ENCODE measurements at regions of chr9 and their contacts with region 1.

Region 1: DNA sequence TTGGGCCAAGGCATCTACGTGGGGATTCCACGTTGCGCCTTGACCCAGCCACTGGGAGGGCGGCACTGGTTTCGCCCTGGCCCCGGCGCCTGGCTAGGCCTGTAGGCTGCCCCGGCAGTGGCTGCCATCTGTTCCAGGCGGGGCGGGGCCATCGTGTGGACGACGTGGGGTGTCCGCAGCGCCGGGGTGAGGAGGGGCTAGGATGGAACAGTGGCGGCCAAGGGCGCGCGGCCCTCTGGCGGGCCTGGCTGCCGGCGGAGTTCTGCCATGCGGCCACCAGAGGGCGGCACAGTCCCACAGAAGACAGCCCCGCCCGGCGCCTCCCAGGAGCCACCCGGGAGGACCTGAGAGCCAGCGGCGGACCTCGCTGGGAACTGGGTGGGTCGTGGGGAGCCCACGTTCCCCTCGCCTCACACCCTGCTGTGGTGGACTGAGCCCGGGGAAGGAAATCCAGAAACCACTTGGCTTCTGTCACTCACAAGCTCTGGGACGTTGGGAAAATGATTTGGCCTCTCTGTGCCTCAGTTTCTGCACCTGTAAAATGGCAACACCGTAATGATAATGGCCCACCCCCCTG is 22.6 kb upstream of the RAPGEF1 start:
- DNase-seq: peak; percentile 47 to 87 (median 68)
- ATAC-seq: peak; percentile 98
- H3K4me3 ChIP-seq: no peak overlapping the region
- H3K4me3 Mint-ChIP-seq: peak overlapping the region in 1 of 10 donors; percentile 19
- H3K27ac ChIP-seq: no peak overlapping the region
- H3K27ac Mint-ChIP-seq: no peak overlapping the region
- H3K4me1 ChIP-seq: no peaks in the 10 kb centered on the region
- H3K4me1 Mint-ChIP-seq: no peaks in the 10 kb centered on the region
- H3K27me3 ChIP-seq: no peaks in the 10 kb centered on the region
- H3K27me3 Mint-ChIP-seq: peaks cover 0 to 39% (median 9%) of the 10 kb centered on the region in 5 donors

Region 2: GRCh38 chr9:131776473-131776872 is 14.0 kb after region 1 on chr9:
- CTCF ChIA-PET with region 1: no interaction called
- POLR2A ChIA-PET with region 1: no interaction called
- intact Hi-C with region 1: no loop called
- DNase-seq: peak in 1 of 9 donors; percentile 54
- ATAC-seq: no peak
- H3K4me3 ChIP-seq: no peak overlapping the region
- H3K4me3 Mint-ChIP-seq: no peak overlapping the region
- H3K27ac ChIP-seq: no peak overlapping the region
- H3K27ac Mint-ChIP-seq: no peak overlapping the region
- H3K4me1 ChIP-seq: no peaks in the 10 kb centered on the region
- H3K4me1 Mint-ChIP-seq: peaks cover 0 to 6% (median 0%) of the 10 kb centered on the region in 7 donors
- H3K27me3 ChIP-seq: no peaks in the 10 kb centered on the region
- H3K27me3 Mint-ChIP-seq: peaks cover 0 to 30% (median 17%) of the 10 kb centered on the region in 5 donors

Region 3: GRCh38 chr9:131954299-131954698 is 191.9 kb after region 1 on chr9:
- CTCF ChIA-PET with region 1: no interaction called
- POLR2A ChIA-PET with region 1: no interaction called
- intact Hi-C with region 1: loop called in 1 of 2 experiments (anchors 5 kb)
- DNase-seq: no peak
- ATAC-seq: no peak
- H3K4me3 ChIP-seq: no peak overlapping the region
- H3K4me3 Mint-ChIP-seq: no peak overlapping the region
- H3K27ac ChIP-seq: no peak overlapping the region
- H3K27ac Mint-ChIP-seq: no peak overlapping the region
- H3K4me1 ChIP-seq: no peaks in the 10 kb centered on the region
- H3K4me1 Mint-ChIP-seq: peaks cover 0 to 4% (median 0%) of the 10 kb centered on the region in 7 donors
- H3K27me3 ChIP-seq: no peaks in the 10 kb centered on the region
- H3K27me3 Mint-ChIP-seq: no peaks in the 10 kb centered on the region

Region 4: GRCh38 chr9:132249123-132249522 is 486.7 kb after region 1 on chr9:
- CTCF ChIA-PET with region 1: interaction called, 5 read pairs
- POLR2A ChIA-PET with region 1: no interaction called
- intact Hi-C with region 1: loop called (anchors 1 kb)
- DNase-seq: no peak
- ATAC-seq: no peak
- H3K4me3 ChIP-seq: no peak overlapping the region
- H3K4me3 Mint-ChIP-seq: no peak overlapping the region
- H3K27ac ChIP-seq: no peak overlapping the region
- H3K27ac Mint-ChIP-seq: no peak overlapping the region
- H3K4me1 ChIP-seq: no peaks in the 10 kb centered on the region
- H3K4me1 Mint-ChIP-seq: peaks cover 0 to 5% (median 0%) of the 10 kb centered on the region in 7 donors
- H3K27me3 ChIP-seq: no peaks in the 10 kb centered on the region
- H3K27me3 Mint-ChIP-seq: peaks cover 0 to 25% (median 0%) of the 10 kb centered on the region in 5 donors

Region 5: DNA sequence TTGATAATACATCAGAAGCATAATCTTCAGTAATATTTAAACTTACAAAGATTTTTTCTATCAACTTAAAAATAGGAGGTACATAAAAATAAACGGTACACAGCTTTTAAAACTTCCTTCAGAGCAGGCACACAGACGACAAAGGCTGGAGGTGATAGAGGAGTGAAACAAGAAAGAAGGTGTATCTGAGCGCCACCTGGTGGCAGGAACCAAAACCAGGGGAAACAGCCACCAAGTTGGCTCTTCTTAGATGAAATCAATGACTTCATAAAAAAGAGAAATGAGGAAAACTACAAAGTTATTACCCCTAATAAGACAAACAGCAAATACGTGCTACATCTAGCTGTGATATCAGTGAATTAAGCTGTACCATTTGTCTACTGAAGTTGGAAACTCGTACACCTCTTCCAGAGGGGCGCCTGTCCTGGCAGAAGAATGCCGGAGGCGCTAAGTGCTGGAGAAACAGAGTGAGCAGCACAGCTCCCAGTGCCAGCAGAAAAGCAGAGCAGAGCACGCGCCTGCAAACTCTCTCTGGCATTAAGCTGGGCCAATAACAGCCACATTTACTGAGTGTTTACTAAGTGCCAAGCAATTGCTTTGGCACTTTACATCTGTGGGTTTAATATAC is 506.4 kb after region 1 on chr9:
- CTCF ChIA-PET with region 1: interaction called, 7 read pairs
- POLR2A ChIA-PET with region 1: no interaction called
- intact Hi-C with region 1: loop called in 1 of 2 experiments (anchors 1 kb)
- DNase-seq: peak; percentile 41 to 72 (median 62)
- ATAC-seq: peak; percentile 80
- H3K4me3 ChIP-seq: no peak overlapping the region
- H3K4me3 Mint-ChIP-seq: no peak overlapping the region
- H3K27ac ChIP-seq: no peak overlapping the region
- H3K27ac Mint-ChIP-seq: peak overlapping the region in 8 of 9 donors; percentile 5 to 73 (median 60)
- H3K4me1 ChIP-seq: no peaks in the 10 kb centered on the region
- H3K4me1 Mint-ChIP-seq: peaks cover 1 to 12% (median 5%) of the 10 kb centered on the region in 7 donors
- H3K27me3 ChIP-seq: no peaks in the 10 kb centered on the region
- H3K27me3 Mint-ChIP-seq: no peaks in the 10 kb centered on the region

Region 6: DNA sequence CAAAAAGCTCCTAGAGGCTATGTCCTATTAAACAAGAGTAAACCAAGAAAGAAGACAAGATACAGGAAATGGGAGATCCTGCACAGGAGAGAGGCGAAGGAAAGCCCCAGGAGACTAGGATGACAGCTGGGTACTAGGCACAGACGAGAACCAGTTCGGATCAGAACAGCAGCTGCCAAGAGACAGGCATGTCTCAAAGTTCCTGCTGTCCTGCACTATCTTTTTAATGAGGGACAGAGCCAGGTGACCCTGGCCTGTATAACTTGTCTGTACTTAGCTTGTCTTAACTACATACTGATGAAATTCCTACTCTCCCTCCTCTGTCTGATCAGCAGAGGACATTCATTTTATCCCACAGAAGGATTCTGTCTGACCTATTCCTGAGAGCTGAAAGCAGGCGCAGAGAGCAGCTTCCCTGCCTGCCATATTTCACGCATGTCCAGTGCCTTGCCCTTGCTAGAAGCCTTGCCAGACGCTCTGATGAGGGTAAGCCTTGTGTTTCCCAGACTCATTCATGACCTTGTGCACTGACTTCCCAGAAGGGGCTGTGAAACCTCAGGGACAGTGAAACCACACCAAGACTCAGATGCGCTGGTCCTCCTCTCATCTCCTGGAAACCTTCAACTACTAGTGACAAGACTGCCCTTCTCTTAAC is 1157.3 kb after region 1 on chr9:
- CTCF ChIA-PET with region 1: no interaction called
- POLR2A ChIA-PET with region 1: no interaction called
- intact Hi-C with region 1: no loop called
- DNase-seq: no peak
- ATAC-seq: no peak
- H3K4me3 ChIP-seq: no peak overlapping the region
- H3K4me3 Mint-ChIP-seq: no peak overlapping the region
- H3K27ac ChIP-seq: no peak overlapping the region
- H3K27ac Mint-ChIP-seq: no peak overlapping the region
- H3K4me1 ChIP-seq: no peaks in the 10 kb centered on the region
- H3K4me1 Mint-ChIP-seq: no peaks in the 10 kb centered on the region
- H3K27me3 ChIP-seq: no peaks in the 10 kb centered on the region
- H3K27me3 Mint-ChIP-seq: no peaks in the 10 kb centered on the region

Region 7: DNA sequence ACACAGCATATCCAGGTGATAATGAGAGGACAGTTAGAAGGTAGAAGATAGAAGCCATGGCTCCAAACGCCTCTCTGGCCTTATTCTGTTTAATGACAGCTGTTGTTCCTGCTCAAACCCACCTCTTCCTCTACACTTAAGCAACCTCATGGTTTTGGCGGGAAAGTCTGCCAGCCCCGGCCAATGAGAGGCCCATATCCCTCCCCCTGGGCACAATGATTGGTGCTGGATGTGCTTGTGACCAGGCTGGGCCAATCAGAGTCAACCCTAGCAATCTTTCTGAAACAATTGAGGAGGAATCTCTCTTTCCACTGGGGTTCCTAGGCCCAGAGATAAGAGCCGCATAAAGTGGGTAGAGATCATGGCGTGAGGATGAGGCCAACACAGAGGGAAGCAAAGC is 1211.3 kb after region 1 on chr9:
- CTCF ChIA-PET with region 1: no interaction called
- POLR2A ChIA-PET with region 1: no interaction called
- intact Hi-C with region 1: loop called in 1 of 2 experiments (anchors 5 kb)
- DNase-seq: no peak
- ATAC-seq: no peak
- H3K4me3 ChIP-seq: no peak overlapping the region
- H3K4me3 Mint-ChIP-seq: no peak overlapping the region
- H3K27ac ChIP-seq: no peak overlapping the region
- H3K27ac Mint-ChIP-seq: no peak overlapping the region
- H3K4me1 ChIP-seq: no peaks in the 10 kb centered on the region
- H3K4me1 Mint-ChIP-seq: peaks cover 5 to 12% (median 8%) of the 10 kb centered on the region in 7 donors
- H3K27me3 ChIP-seq: peaks cover 0 to 7% of the 10 kb centered on the region in 2 donors
- H3K27me3 Mint-ChIP-seq: peaks cover 12 to 34% (median 25%) of the 10 kb centered on the region in 5 donors

Region 8: DNA sequence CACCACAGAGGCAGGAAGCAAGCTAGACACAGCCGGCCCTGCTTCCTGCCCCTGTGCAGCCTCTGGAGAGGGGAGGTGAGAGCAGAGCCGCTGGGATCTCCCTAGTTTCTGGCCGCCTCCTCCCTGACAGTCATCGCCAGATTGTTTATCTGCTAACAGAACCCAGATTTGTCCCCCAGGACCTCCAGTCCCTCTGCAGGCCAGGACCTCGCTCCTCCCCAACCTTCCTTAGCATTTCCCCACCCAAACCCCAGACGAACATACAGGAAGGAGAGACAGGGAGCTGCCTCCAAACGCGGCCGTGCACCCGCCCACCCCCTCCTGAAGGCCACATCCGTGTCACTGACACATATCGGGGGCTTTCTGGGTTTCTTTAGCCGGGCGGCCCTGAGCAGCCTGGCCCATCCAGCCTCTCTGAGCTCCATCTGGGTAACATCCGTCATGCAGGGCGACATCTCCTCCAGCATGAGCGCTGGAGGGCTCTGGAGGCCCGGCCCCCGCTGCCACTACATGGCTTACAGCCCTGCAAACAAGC is 1921.2 kb after region 1 on chr9:
- CTCF ChIA-PET with region 1: no interaction called
- POLR2A ChIA-PET with region 1: no interaction called
- intact Hi-C with region 1: no loop called
- DNase-seq: peak; percentile 47 to 89 (median 83)
- ATAC-seq: peak; percentile 88
- H3K4me3 ChIP-seq: peak overlapping the region; percentile 28
- H3K4me3 Mint-ChIP-seq: peak overlapping the region; percentile 73 to 93 (median 88)
- H3K27ac ChIP-seq: peak overlapping the region; percentile 95
- H3K27ac Mint-ChIP-seq: peak overlapping the region; percentile 99 to 100 (median 99)
- H3K4me1 ChIP-seq: peaks cover 28 to 44% of the 10 kb centered on the region in 2 donors
- H3K4me1 Mint-ChIP-seq: peaks cover 13 to 60% (median 38%) of the 10 kb centered on the region in 7 donors
- H3K27me3 ChIP-seq: no peaks in the 10 kb centered on the region
- H3K27me3 Mint-ChIP-seq: no peaks in the 10 kb centered on the region